ENCODE measurements at regions of chr14 and their contacts with region 1.

Region 1: GRCh38 chr14:52789118-52789517 is 2.3 kb downstream of the GNPNAT1 start:
- DNase-seq: no peak

Region 2: DNA sequence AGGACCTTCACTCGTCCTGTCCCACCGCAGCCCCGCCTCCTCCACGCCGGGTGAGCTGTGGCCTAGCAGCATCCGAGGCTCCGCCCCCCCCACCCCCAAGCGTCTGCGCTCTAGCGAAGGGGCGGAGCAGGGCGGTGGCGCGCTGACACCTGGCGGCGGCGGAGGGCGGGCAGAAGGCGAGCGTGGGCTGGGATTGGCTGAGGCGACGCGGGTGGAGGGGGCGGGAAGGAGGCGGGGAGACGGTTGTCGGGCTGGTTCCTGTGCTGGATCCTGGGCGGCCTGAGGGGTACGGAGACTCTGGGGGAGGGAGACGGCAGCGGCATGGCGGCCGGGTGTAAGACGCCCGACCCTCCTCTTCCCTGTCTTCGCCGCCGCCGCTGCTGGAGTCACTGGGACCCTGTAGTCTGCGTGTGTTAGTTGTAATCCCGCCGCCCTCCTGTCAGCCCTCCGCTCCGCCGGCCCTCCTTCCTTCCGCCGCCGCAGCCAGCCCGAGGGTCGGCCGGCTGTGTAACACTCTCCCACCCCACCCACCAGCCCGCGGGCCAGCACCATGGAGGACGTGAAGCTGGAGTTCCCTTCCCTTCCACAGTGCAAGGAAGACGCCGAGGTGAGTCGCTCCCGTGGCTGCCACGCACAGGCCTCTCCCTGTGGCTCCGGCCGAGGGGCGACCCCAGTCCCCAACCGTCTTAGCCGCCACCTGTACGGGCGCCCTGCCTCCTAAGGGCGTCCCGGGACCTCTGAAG is 59.0 kb before region 1 on chr14 and contains the start of gene STYX:
- intact Hi-C with region 1: loop called in 1 of 2 experiments (anchors 10 kb)
- DNase-seq: peak; percentile 99
- total RNA-seq, gene STYX: 15.1 to 18.7 TPM

Region 3: DNA sequence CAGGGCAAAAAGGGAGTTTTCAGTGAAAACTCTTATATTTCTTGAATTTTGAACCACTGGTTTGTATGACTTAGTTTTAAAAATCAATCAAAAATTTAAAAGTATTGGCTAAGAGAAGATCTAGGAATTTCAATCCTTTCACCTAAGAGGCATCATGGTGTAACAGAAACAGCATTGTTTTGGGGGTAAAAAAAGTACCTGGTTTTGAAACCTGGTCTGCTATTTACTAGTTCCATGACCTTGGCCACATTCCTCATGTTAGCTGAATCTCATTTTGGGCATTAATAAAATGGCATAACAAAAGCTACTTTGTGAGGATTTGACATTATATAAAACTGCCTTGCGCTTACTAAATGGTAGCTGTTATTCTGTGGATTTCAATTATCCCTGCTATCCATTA is 19.0 kb after region 1 on chr14:
- intact Hi-C with region 1: no loop called
- DNase-seq: no peak

Region 4: DNA sequence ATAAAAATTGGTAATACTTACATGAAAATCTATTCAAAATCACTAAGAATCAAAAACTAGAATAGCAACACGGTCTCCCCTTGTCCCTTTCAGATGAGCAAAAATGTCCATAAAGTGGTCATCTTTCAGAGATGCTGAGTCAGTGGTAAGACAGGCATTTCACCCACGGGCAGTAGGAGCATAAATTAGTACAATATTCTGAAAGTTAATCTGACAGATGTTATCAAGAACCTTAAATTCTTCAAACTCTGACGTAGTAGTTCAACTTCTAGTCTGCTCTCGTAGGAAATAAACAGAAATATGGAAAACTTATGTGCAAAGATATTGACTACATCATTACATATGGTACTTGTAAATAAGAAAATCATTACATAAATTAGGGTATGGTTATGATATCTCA is 35.4 kb after region 1 on chr14:
- intact Hi-C with region 1: no loop called
- DNase-seq: no peak